PC-9 (cell line): ENCODE measurements at regions of chr13 and their contacts with region 1.

Region 1: DNA sequence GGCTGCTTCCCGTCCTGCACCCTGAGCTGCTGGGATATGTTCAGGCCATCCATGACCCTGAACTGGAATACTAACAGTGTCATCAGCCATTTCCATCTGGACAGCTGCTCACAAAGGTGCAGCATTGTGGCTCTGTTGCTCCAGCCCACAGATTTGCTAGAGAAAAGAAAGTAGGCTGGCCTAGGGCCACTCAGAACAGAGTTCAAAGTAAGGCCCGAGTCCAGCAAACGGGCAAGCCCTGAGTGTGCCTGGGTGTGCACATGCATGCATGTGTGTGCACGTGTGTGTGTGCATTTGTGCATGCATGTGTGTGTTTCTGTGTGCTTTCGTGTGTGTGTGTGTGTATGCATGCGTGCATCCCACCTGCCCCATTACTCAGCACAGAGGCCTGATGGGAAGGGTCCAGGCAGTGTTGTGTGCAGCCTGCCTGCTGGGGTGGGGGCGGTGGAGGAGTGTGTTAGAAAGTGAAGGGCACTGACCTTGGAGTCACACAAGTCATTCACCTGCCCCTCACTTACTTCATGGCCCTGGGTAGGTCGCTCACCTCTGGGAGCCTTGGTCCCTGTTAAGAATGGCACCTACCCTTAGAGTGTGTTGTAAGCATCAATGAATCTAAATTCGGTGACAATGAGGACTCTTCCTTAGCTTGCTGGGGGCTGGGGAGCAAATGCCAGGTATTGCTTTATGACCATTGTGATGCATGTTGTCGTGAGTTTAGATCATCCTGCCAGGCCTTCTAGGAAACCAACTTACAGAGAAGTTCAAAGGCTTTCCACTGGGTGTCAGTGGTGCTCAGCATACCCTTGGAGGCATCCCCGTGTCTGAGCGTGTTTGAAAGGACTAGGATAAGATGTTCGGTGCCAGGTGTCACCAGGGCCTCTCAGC is 53.2 kb downstream of the GPR12 start:
- DNase-seq: no peak
- H3K4me3 ChIP-seq: no peak overlapping the region
- H3K27ac ChIP-seq: no peak overlapping the region
- H3K4me1 ChIP-seq: no peaks in the 10 kb centered on the region
- H3K27me3 ChIP-seq: peaks cover 54% of the 10 kb centered on the region
- CTCF ChIP-seq: peak; percentile 63

Region 2: DNA sequence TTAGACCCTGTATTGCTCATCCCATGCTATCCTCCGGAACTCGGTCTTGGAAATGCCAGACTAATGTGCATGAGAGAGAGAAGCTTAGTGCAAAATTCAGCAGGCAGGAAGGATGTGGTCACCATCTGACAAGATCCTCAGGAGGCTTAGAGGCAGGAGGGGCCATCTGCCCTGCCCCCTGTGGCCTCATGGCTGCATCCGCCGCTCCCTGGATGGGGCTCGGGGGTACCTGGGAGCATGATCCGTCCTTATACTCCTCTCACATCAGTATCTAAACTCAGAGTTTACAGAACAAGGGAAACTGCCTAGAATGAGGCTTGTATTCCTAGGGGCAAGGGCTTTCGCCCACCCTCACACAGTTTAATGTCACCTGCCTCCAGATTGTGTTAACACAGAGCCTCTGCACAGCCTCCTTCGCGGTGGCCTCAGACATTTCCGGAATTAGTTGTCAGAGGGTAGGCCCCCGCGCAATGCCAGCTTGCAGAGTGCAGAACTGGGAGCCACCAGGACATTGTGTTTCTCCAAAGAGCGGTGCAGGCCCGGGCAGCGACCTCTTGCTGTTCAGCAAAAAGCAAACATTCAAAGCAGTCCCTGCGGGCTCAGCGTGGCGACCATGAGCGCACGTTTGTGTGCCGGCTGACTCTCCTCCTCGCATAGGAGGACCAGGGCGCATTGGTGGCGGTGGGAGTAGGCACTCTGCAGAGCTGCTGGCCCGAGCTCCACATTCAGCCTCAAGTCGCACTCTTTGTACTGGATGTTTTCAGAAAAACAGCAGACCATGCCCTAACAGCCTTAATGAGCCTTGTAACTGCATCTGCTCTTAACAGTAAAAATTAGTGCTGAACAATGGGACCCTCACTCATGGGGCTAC is 14.1 kb after region 1 on chr13:
- CTCF ChIA-PET with region 1: no interaction called
- POLR2A ChIA-PET with region 1: no interaction called
- intact Hi-C with region 1: no loop called
- DNase-seq: no peak
- H3K4me3 ChIP-seq: no peak overlapping the region
- H3K27ac ChIP-seq: no peak overlapping the region
- H3K4me1 ChIP-seq: no peaks in the 10 kb centered on the region
- H3K27me3 ChIP-seq: peaks cover 47% of the 10 kb centered on the region
- CTCF ChIP-seq: no peak

Region 3: DNA sequence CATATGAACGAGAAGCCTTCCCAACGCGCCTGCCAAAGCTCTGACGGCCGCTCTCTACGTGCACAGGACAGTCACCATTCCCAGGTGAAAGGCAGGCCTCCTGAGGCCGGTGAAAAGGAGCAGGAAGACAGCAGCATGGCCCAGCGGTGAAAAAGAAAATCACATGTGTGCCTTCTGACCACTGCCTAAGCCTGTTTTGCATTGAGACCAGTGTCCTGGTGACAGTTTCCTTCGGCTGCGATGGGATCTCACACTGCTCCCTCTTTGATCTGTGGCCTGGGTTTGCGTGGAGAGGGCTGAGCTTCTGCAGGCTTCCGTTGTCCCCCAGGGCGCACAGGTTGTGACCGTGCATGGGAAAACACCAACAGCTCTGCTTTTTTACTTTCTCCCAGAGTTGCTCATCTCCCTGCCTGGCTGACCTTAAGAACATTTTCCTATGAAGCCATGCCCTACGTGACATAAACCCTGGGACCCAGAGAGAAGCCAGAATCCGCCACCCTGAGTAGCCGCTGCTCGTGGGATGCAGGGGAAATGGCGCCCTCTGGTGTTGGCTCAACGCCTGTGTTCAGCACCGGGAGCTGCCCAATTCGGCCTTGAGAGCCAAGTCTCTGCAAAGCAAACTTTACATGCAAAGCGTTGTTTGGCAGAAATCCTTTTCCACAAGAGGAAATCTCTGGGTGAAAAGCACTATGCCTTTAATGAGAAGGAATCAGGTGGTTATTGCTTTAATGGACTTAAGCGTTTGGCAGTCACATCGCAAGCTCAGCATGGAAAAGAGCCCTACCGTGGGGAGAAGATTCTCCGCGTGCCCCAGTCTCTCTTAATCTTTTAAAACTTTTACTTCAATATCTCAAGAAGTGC is 165.4 kb after region 1 on chr13:
- CTCF ChIA-PET with region 1: no interaction called
- POLR2A ChIA-PET with region 1: no interaction called
- intact Hi-C with region 1: loop called (anchors 10 kb)
- DNase-seq: peak in 1 of 2 experiments; percentile 15
- H3K4me3 ChIP-seq: no peak overlapping the region
- H3K27ac ChIP-seq: no peak overlapping the region
- H3K4me1 ChIP-seq: no peaks in the 10 kb centered on the region
- H3K27me3 ChIP-seq: peaks cover 28% of the 10 kb centered on the region; the same call in 1 of the 2 replicates
- CTCF ChIP-seq: peak; percentile 79

Region 4: DNA sequence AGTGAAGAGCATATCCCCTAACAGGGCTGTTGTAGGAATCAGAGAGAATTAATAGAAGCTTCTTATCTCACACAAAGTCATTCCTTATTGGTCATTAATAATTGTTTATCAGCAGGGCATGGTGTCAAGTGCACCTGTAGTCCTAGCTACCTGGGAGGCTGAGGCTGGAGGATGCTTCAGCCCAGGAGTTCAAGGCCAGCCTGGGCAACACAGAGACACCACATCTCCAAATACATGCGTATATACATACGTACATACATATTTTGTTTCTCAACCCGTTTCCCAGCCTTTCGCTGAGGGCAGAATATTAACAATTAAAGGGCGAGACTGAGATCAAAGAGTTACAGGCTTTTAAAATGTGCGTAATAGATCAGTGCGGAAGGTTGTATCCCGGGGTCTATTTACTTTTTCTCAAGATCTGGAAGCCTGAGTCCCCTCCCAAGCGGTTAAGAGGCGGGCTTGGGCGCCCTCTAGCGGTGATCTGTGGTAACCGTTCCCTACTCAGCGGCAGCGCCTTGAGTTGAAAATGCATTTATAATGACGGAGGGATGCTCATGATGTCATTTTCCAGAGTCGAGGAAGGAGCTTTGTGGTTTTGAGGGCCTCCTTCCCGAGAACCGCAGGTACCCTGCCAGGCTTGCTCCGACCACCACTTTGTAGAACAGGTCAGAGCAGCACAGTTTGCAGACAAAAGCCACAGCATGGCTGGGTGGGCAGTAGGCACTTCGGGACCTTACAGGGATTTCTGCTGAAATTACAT is 222.8 kb after region 1 on chr13:
- CTCF ChIA-PET with region 1: no interaction called
- POLR2A ChIA-PET with region 1: no interaction called
- intact Hi-C with region 1: loop called (anchors 5 kb)
- DNase-seq: peak in 1 of 2 experiments; percentile 48
- H3K4me3 ChIP-seq: no peak overlapping the region
- H3K27ac ChIP-seq: no peak overlapping the region
- H3K4me1 ChIP-seq: no peaks in the 10 kb centered on the region
- H3K27me3 ChIP-seq: peaks cover 73% of the 10 kb centered on the region
- CTCF ChIP-seq: peak; percentile 95